A549 (cell line): ENCODE measurements at regions of chr7 and their contacts with region 1.

Region 1: DNA sequence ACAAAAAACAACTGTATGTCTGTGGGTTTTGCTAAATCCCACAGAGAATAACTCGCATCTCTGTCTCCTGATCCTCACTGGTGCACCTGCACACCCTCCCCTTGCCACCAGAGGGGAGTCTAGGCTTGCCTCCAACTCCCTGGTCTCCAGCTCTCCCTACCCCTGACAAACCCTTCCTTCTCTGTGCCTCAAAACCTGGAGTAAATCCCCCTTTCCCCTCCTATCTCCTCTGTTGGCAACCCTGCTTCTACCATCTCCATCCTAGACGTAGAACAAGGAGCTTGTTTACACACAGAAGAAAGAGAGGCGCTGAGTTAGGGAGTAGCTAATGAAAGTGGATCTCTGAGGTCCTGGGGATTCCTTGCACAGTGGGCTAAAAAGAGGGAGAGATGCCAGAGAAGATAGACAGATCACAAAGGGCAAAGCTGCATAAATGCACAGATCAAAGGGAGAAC is 6.0 kb downstream of the MBLAC1 start:
- DNase-seq: peak; percentile 74 to 86
- ATAC-seq: peak; percentile 92
- H3K4me3 ChIP-seq: no peak overlapping the region
- H3K27ac ChIP-seq: no peak overlapping the region
- H3K4me1 ChIP-seq: peaks cover 13% of the 10 kb centered on the region; the same call in 1 of the 3 replicates
- CTCF ChIP-seq: peak; percentile 87
- EP300 ChIP-seq: no peak
- POLR2A ChIP-seq: no peak
- RAD21 ChIP-seq: peak; percentile 90 to 96

Region 2: GRCh38 chr7:100111914-100112313 is 20.8 kb before region 1 on chr7:
- CTCF ChIA-PET with region 1: interaction called, 19 read pairs
- POLR2A ChIA-PET with region 1: no interaction called
- DNase-seq: no peak
- ATAC-seq: peak in 1 of 2 experiments; percentile 6; a peak in 2 of 6 replicates
- H3K4me3 ChIP-seq: no peak overlapping the region
- H3K27ac ChIP-seq: no peak overlapping the region
- H3K4me1 ChIP-seq: no peaks in the 10 kb centered on the region
- CTCF ChIP-seq: no peak
- EP300 ChIP-seq: no peak
- POLR2A ChIP-seq: no peak
- RAD21 ChIP-seq: no peak

Region 3: DNA sequence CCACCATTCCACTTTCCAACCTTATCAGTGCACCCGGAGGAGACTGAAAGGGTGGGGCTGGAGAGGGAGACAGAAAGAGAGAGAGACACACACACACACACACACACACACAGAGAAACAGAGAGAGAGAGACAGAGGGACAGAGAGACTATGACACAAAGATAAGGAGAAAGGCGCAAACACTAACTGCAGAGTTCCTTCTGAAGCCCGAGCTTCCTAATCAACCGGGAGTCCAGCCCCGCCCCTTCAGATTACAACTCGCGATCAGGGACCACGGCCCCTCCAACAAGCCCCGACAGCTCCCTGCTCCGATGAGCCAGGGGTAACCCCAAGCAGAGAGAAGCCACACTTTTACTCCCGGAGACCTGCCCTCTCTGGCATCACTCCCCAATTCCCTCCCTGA is 35.2 kb after region 1 on chr7:
- CTCF ChIA-PET with region 1: interaction called, 16 read pairs
- POLR2A ChIA-PET with region 1: no interaction called
- DNase-seq: no peak
- ATAC-seq: no peak
- H3K4me3 ChIP-seq: no peak overlapping the region
- H3K27ac ChIP-seq: no peak overlapping the region
- H3K4me1 ChIP-seq: peaks cover 6% of the 10 kb centered on the region; the same call in 2 of the 3 replicates
- CTCF ChIP-seq: no peak
- EP300 ChIP-seq: no peak
- POLR2A ChIP-seq: no peak
- RAD21 ChIP-seq: no peak

Region 4: DNA sequence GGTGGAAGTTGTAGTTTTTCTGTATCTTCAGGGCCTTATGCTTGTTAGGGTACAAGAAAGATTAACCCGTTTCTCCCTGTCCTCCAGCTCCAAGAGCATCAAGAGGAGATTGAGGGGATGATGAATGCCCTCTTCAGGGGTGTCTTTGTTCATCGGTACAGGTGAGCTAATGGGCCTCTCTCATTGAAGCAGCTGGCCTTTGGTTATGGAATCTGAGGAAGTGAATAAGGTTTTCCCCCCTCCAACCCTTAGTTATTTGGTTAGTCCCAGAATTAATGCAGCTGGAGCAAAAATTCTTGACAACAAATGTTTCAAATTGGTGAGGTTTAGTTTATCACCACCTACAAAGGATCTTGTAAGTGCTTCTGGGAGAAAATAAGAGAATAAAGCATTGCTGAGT is 62.5 kb after region 1 on chr7:
- CTCF ChIA-PET with region 1: interaction called, 14 read pairs
- POLR2A ChIA-PET with region 1: no interaction called
- DNase-seq: no peak
- ATAC-seq: no peak
- H3K4me3 ChIP-seq: no peak overlapping the region
- H3K27ac ChIP-seq: no peak overlapping the region
- H3K4me1 ChIP-seq: peaks cover 2% of the 10 kb centered on the region; the same call in 2 of the 3 replicates
- CTCF ChIP-seq: no peak
- EP300 ChIP-seq: no peak
- POLR2A ChIP-seq: no peak
- RAD21 ChIP-seq: no peak

Region 5: DNA sequence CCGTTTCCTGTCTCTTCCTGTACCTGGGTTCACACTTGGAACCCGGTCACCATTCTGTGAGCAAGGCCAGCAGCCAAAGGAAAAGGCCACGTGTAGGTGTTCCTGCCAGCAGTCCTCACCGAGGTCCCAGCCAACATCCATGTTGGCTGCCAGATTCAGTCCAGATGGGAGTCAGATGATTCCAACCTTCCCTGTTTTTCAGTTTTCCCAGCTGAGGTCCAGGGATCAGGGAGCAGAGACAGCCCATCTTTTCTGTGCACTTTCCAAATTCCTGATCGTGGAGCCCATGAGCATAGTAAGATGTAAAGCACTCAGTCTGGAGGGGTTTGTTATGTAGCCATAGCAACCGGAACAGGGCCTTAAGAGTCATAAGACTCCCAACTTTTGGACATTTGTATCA is 83.2 kb after region 1 on chr7:
- CTCF ChIA-PET with region 1: interaction called, 58 read pairs
- POLR2A ChIA-PET with region 1: no interaction called
- DNase-seq: no peak
- ATAC-seq: no peak
- H3K4me3 ChIP-seq: no peak overlapping the region
- H3K27ac ChIP-seq: no peak overlapping the region
- H3K4me1 ChIP-seq: no peaks in the 10 kb centered on the region
- CTCF ChIP-seq: no peak
- EP300 ChIP-seq: no peak
- POLR2A ChIP-seq: no peak
- RAD21 ChIP-seq: no peak

Region 6: GRCh38 chr7:100407285-100408180 is 274.8 kb after region 1 on chr7:
- CTCF ChIA-PET with region 1: interaction called, 23 read pairs
- POLR2A ChIA-PET with region 1: no interaction called
- DNase-seq: peak; percentile 72 to 84
- ATAC-seq: peak; percentile 93 to 94
- H3K4me3 ChIP-seq: no peak overlapping the region
- H3K27ac ChIP-seq: no peak overlapping the region
- H3K4me1 ChIP-seq: no peaks in the 10 kb centered on the region
- CTCF ChIP-seq: peak; percentile 72
- EP300 ChIP-seq: no peak
- POLR2A ChIP-seq: no peak
- RAD21 ChIP-seq: peak; percentile 70 to 77